Tibial artery (tissue), 4 donors: ENCODE measurements at regions of chr16 and their contacts with region 1.

Region 1: DNA sequence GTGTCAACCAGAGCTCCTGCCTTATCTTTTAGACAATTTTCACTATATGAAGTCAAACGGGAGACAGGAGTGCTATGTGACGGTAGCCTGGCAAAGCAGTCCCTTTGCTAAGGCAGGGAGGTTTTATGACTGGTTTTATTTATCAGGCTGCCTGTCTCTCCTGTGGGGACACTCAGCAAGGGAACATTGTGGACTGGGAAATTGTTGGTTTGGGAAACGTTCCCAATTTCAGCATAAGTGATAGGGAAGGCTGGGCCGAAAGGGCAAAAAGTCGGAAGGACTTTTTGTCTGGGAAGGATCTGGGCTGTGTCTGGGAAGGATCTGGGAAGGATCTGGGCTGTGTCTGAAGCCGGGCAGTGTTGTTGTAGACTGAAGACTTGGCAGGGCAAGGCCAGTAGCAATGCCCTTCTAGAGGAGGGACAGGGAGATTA is 211.2 kb downstream of the PARN start:
- DNase-seq: peak; percentile 69 to 87
- H3K4me3 ChIP-seq: peak overlapping the region; percentile 24 to 43
- H3K27ac ChIP-seq: peak overlapping the region; percentile 78 to 85
- H3K4me1 ChIP-seq: peaks cover 0 to 65% (median 35%) of the 10 kb centered on the region in 4 donors
- H3K27me3 ChIP-seq: no peaks in the 10 kb centered on the region
- CTCF ChIP-seq: no peak

Region 2: DNA sequence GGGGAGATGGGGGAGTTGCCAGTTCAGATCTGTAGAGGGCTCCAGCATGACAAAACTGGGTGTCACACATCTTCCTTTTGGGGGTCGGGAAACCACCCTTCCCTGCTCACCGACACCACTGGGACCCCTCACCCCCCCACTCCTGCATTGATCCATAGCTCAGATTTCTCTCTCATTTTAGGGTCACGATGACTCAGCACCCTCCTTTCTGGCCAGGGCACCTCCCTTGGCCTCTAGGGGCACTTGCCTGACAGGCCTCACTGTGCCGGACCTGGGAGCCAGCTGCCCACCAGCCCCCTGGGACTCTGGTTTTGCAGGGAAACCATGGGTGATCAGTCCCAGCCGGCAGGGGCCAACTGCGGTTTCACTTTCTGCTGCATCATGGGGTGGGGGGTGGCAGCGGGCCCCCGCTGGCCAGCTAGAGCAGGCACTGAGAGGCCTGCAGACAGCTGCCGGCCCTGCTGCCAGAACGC is 108.3 kb before region 1 on chr16:
- intact Hi-C with region 1: loop called (anchors 10 kb)
- DNase-seq: no peak
- H3K4me3 ChIP-seq: peak overlapping the region in 1 of 2 donors; percentile 20
- H3K27ac ChIP-seq: peak overlapping the region in 1 of 2 donors; percentile 69
- H3K4me1 ChIP-seq: peaks cover 4 to 78% (median 53%) of the 10 kb centered on the region in 4 donors
- H3K27me3 ChIP-seq: no peaks in the 10 kb centered on the region
- CTCF ChIP-seq: no peak

Region 3: GRCh38 chr16:14486520-14487303 is 67.9 kb after region 1 on chr16:
- intact Hi-C with region 1: no loop called
- DNase-seq: peak; percentile 88 to 90
- H3K4me3 ChIP-seq: peak overlapping the region; percentile 33 to 34
- H3K27ac ChIP-seq: peak overlapping the region; percentile 56 to 64
- H3K4me1 ChIP-seq: peaks cover 0 to 24% (median 6%) of the 10 kb centered on the region in 4 donors
- H3K27me3 ChIP-seq: no peaks in the 10 kb centered on the region
- CTCF ChIP-seq: peak; percentile 9 to 24

Region 4: DNA sequence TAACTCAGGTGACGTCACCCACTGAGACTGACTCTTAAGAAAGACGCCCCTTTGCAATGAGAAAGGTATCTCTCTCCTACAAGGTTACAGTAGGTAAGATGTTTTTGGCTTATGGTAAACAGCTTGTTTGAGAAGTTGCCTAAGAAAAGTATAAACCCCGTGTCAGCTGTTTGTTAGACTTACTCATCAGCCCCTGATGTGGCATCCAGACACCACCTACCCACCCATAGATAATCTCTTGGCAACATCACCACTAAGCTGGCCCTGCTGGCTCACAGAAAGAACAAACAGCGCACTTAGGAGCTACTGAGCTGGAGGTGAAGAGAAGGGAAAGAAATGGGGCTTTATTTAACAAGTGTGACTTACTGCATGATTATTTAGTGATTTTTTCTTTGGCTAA is 90.2 kb after region 1 on chr16:
- intact Hi-C with region 1: loop called (anchors 5 kb)
- DNase-seq: no peak
- H3K4me3 ChIP-seq: no peak overlapping the region
- H3K27ac ChIP-seq: peak overlapping the region in 1 of 2 donors; percentile 1
- H3K4me1 ChIP-seq: peaks cover 0 to 29% (median 4%) of the 10 kb centered on the region in 4 donors
- H3K27me3 ChIP-seq: no peaks in the 10 kb centered on the region
- CTCF ChIP-seq: no peak